ENCODE measurements at regions of chr3 and their contacts with region 1.

Region 1: GRCh38 chr3:15098503-15099363 is at the start of gene RBSN:
- DNase-seq: peak; percentile 85 to 96
- H3K4me3 ChIP-seq: peak within 1 kb of the TSS; percentile 88 to 93
- H3K27ac ChIP-seq: peak within 1 kb of the TSS; percentile 91
- H3K4me1 ChIP-seq: peaks cover 0 to 47% of the 10 kb centered on the region in 2 donors
- H3K27me3 ChIP-seq: no peaks in the 10 kb centered on the region
- CTCF ChIP-seq: no peak
- total RNA-seq, gene RBSN: 17.2 TPM

Region 2: DNA sequence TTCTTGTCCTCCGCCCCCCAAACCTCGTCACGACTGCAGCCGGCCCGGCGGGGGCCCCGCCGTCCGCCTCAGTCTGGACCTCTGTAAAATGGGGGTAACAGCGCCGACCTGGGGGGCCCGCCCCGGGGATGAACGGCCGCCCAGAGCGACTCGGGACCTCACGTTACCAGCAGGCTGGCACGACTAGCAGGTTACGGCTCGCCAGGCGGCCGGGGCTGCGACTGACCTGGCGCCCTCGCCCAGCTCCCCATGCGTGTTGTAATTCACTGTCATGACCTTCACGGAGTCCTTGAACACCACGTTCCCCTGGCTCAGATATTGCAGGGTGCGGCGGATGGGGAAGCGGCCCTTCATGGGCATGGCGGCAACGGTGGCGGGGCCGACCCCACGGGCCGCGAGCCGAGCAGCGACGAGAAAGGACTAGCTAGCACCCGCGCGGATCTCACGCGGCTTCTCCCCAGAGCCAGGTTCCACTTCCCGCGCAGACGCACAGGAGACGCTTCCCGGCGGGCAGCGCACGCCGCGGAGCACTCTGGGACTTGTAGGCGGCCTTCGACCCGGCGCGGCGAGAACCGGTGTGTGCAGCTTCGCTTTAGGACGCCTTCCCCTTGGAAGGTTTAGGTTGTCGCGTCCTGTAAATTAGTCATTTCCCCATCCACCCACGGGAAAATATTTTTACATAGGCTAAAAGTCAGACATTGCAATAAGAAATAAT is 33.7 kb before region 1 on chr3 and contains the start of gene MRPS25:
- intact Hi-C with region 1: loop called (anchors 2 kb)
- DNase-seq: peak; percentile 62 to 95
- H3K4me3 ChIP-seq: peak within 1 kb of the TSS; percentile 69 to 95
- H3K27ac ChIP-seq: peak within 1 kb of the TSS; percentile 69 to 71
- H3K4me1 ChIP-seq: peaks cover 0 to 5% of the 10 kb centered on the region in 2 donors
- H3K27me3 ChIP-seq: no peaks in the 10 kb centered on the region
- CTCF ChIP-seq: no peak
- total RNA-seq, gene MRPS25: 8.1 TPM

Region 3: DNA sequence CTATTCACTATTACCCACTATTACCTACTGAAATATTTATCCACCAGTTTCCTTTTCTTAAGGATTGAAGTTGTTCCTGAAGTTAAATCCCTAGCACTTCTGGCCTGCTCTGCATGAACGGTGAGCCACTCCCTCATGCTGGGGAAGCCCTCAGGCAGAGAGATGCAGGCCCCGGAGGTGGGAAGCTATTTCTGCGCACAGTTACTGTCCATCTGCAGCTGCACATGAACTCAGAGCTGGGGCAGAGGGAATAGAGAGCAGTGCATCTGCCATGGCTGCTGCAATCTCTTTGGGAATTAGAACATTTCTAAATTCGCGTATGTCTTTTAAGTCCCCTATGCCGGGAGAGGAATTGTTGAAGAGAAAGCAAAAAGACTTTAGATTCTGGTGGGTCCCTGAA is 1069.5 kb after region 1 on chr3:
- intact Hi-C with region 1: no loop called
- DNase-seq: no peak
- H3K4me3 ChIP-seq: no peak overlapping the region
- H3K27ac ChIP-seq: no peak overlapping the region
- H3K4me1 ChIP-seq: peaks cover 0 to 5% of the 10 kb centered on the region in 2 donors
- H3K27me3 ChIP-seq: no peaks in the 10 kb centered on the region
- CTCF ChIP-seq: no peak

Measured in ascending aorta (tissue), 2 donors.